ENCODE measurements at regions of chr16 and their contacts with region 1.

Region 1: DNA sequence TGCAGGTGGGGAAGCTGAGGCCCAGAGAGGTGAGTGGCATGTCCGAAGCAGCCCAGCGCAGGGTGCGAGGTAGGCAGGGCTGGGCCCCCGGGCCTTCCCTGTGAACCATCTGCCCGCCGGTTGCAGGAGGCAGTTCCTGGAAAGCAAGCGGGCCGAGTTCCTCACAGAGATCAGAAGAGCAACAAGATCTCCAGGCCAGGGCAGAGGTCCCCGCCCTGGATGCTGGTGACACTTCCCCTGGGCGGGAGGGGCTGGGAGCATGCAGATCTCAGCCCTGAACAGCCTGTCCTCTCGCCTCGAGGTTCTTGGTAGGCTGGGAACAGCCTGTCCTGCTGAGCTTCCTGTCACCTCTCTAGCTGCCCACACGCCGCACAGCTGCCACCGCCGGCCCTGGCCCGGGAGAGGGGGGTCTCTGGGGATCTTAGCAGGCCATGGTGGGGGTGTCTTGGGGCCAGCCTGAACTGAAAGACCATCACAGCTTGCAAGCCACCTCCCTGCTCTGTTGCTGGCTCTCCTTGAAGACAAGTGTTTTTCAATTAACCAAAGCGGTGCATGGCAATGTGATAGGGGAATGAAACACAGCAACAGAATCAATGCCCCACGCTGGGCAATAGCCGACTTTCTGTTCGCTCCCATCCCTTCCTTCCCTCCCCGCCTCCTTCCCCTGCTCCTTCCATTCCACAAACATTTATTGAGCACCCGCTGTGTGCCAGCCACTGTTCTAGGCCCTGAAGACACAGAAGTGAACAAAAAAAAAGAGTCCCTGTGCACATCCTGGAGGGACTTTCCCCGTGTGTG is 31.7 kb downstream of the SOCS1 start:
- DNase-seq: peak; percentile 80
- ATAC-seq: peak; percentile 78
- H3K4me3 Mint-ChIP-seq: peak overlapping the region; percentile 74
- H3K27ac Mint-ChIP-seq: peak overlapping the region; percentile 100
- H3K4me1 Mint-ChIP-seq: peaks cover 60% of the 10 kb centered on the region
- H3K27me3 Mint-ChIP-seq: no peaks in the 10 kb centered on the region

Region 2: GRCh38 chr16:11094072-11094856 is 130.0 kb before region 1 on chr16:
- POLR2A ChIA-PET with region 1: interaction called, 23 read pairs
- DNase-seq: peak; percentile 67
- ATAC-seq: peak; percentile 84
- H3K4me3 Mint-ChIP-seq: peak overlapping the region; percentile 61
- H3K27ac Mint-ChIP-seq: peak overlapping the region; percentile 94
- H3K4me1 Mint-ChIP-seq: peaks cover 60% of the 10 kb centered on the region
- H3K27me3 Mint-ChIP-seq: no peaks in the 10 kb centered on the region

Region 3: DNA sequence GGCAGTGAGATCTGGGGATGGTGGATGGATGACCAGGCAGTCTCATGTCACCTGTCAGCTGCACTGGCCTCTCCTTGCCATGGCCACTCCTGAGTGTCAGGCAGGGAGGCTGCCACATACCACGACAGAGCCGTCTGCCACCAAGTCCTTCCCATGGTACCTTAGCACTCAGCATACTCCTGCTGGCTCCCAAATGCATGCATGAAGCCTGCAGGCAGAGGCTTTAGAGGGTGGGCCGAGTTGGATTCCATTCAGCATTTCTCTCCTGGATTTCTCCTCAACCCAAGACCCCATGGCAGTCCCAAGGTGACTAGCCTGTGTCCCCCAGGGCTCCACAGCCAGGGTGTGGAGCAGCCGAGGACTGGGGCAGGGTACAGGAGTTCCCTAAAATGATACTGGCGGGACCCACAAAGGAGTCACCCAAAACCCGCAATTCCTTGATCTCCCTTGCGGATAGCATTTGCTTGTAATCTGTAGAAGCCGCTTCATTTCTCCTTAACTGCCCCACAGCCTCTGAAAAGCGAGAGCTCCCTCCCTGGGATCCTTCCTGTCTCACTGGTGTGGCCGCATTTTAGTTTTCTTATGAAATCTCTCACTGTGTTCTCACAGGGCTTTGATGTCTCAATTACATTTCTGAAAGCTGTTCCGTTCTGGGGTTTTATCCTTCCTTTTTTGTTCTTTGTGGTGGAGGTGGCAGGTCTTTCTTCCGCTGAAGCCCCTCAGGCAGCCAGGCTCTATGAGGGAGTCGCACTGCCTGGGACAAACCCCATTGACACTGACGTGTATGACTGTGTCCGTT is 109.7 kb before region 1 on chr16:
- POLR2A ChIA-PET with region 1: interaction called, 10 read pairs
- DNase-seq: no peak
- ATAC-seq: peak; percentile 89
- H3K4me3 Mint-ChIP-seq: peak overlapping the region; percentile 69
- H3K27ac Mint-ChIP-seq: peak overlapping the region; percentile 96
- H3K4me1 Mint-ChIP-seq: peaks cover 57% of the 10 kb centered on the region
- H3K27me3 Mint-ChIP-seq: no peaks in the 10 kb centered on the region

Region 4: DNA sequence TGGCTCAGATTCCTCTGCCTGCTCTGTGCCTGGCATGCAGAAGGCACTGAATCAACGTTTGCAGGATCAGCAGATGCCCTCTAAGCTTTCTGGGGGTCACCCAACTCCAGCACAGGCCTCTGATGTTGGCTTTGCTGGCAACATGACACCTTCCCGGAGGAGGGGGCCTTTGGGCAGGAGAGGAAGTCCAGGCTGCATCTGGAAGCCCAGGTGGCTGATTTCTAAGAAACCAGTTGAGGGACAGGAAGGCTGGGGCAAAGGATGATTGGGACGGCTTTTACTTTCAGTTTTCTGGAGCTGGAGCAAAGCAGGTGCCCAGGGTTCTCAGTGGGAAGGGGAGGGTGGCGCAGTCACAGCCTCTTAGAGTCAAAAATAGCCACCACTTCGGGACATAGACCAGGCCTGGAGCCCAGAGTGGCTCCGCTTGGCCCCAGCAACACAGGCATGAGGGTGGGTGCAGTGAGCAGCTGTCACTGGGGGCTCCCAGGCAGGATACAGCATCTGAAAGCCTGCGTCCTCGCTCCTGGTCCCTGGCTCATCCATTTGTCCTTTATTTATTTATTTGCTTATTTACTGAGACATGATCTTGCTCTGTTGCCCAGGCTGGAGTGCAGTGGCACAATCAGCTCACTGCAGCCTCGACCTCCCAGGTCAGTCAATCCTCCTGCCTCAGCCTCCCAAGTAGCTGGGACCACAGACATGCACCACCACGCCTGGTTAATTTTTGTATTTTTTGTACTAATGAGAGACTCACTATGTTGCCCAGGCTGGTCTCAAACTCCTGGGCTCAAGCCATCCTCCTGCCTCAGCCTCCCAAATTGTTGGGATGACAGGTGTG is 16.6 kb after region 1 on chr16:
- POLR2A ChIA-PET with region 1: interaction called, 227 read pairs
- DNase-seq: no peak
- ATAC-seq: peak; percentile 61
- H3K4me3 Mint-ChIP-seq: no peak overlapping the region
- H3K27ac Mint-ChIP-seq: no peak overlapping the region
- H3K4me1 Mint-ChIP-seq: peaks cover 49% of the 10 kb centered on the region
- H3K27me3 Mint-ChIP-seq: no peaks in the 10 kb centered on the region

Measured in activated naive CD8-positive, alpha-beta T cell treated with anti-CD3 and anti-CD28 coated beads, Interleukin-2, amount 10 ng/mL, durations not matched to agents 7 days and 5 days (primary cell).